ENCODE measurements at regions of chr3 and their contacts with region 1.

Region 1: GRCh38 chr3:77038468-77038929 is 1.4 kb upstream of the ROBO2 start:
- DNase-seq: peak; percentile 93
- H3K4me3 ChIP-seq: peak overlapping the region; percentile 67
- H3K27ac ChIP-seq: peak overlapping the region; percentile 82
- H3K4me1 ChIP-seq: peaks cover 6% of the 10 kb centered on the region
- H3K27me3 ChIP-seq: no peaks in the 10 kb centered on the region
- CTCF ChIP-seq: peak; percentile 55

Region 2: DNA sequence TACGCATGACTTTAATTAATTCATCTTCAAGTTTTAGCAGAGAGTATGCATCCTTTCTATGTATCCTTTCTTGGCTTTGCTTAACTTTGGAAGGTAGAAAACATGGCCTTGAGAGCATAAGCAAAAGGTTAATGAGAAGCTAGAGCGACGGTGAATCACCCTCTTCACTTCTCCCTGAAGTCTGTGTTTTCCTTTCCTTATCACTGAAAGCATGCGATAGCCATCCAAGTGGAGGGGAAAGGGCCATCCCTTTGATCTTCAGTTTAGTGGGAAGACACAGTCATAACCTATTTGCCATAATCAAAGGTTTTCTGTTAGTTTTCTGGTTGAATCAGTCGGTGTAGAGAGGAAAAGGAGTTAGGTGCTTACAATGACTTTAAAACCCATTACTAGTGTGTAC is 352.6 kb before region 1 on chr3:
- CTCF ChIA-PET with region 1: no interaction called
- POLR2A ChIA-PET with region 1: no interaction called
- intact Hi-C with region 1: loop called (anchors 5 kb)
- DNase-seq: no peak
- H3K4me3 ChIP-seq: no peak overlapping the region
- H3K27ac ChIP-seq: no peak overlapping the region
- H3K4me1 ChIP-seq: peaks cover 13% of the 10 kb centered on the region
- H3K27me3 ChIP-seq: no peaks in the 10 kb centered on the region
- CTCF ChIP-seq: no peak

Region 3: GRCh38 chr3:76815561-76815960 is 222.9 kb before region 1 on chr3:
- CTCF ChIA-PET with region 1: no interaction called
- POLR2A ChIA-PET with region 1: no interaction called
- intact Hi-C with region 1: loop called (anchors 2 kb)
- DNase-seq: no peak
- H3K4me3 ChIP-seq: no peak overlapping the region
- H3K27ac ChIP-seq: peak overlapping the region; percentile 10
- H3K4me1 ChIP-seq: peaks cover 33% of the 10 kb centered on the region
- H3K27me3 ChIP-seq: no peaks in the 10 kb centered on the region
- CTCF ChIP-seq: no peak

Region 4: GRCh38 chr3:77096966-77097890 is 58.7 kb after region 1 on chr3:
- CTCF ChIA-PET with region 1: no interaction called
- POLR2A ChIA-PET with region 1: no interaction called
- intact Hi-C with region 1: loop called (anchors 5 kb)
- DNase-seq: peak; percentile 78
- H3K4me3 ChIP-seq: peak overlapping the region; percentile 38
- H3K27ac ChIP-seq: peak overlapping the region; percentile 74
- H3K4me1 ChIP-seq: peaks cover 25% of the 10 kb centered on the region
- H3K27me3 ChIP-seq: no peaks in the 10 kb centered on the region
- CTCF ChIP-seq: no peak

Region 5: DNA sequence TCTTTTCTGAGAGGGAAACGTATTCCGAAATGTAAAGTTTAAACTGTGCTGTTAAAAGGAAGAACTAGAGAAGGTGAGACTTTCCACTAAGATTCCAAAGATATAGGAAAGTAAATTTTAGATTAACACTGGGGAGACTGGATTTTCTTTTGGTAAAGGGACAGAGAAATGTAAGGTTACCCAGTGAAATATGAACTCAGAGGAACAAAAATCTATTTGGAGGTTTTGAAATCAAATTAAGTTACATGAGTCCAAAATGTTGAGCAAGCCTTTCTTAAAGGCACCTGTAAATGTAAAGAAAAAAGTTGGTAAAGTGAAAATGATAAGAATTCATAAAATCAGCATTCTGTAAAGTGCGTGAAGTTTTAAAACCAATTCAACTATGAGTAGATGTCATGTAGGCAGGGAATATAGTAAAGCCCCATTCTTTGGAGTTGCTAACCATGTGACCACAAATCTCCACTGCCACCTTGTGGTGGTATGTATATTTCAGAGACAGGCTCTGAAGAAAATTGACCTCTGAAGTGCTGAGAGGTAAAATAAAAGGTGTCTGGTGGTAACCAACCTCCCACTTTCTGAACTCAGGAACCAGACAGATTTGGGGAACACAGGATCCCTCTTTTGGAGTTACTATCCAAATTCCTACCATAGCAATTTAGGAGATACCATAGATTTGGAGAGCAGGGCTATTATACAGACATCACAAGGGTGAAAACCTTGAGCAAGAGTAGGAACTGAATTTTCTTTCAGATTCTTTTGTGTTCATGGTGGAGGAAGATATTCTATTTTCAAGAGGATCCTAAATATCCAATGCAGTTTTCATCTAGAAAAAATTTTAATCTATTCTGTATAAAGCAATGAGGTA is 216.7 kb after region 1 on chr3:
- CTCF ChIA-PET with region 1: interaction called, 4 read pairs
- POLR2A ChIA-PET with region 1: no interaction called
- intact Hi-C with region 1: loop called (anchors 1 kb)
- DNase-seq: peak; percentile 68
- H3K4me3 ChIP-seq: no peak overlapping the region
- H3K27ac ChIP-seq: no peak overlapping the region
- H3K4me1 ChIP-seq: peaks cover 30% of the 10 kb centered on the region
- H3K27me3 ChIP-seq: no peaks in the 10 kb centered on the region
- CTCF ChIP-seq: peak; percentile 67

Region 6: DNA sequence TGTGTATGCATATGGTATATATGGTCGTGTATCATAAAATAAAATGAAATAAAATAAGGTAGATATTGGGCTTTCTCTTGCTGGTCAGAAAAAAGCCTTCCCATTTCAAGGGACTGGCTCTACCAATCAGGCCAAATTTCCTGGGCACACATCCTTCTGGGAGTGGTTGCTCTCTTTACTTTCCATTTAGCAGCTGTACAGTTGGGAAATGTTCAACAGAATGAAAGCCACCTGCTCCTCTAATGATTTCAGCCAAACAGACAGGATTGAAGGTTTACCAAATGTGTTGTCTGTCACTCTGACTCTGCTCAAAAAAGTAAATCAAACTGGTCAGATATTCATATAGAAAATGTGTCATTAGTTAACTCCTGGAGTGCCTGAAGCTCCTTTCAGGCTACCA is 381.8 kb after region 1 on chr3:
- CTCF ChIA-PET with region 1: no interaction called
- POLR2A ChIA-PET with region 1: no interaction called
- intact Hi-C with region 1: loop called (anchors 2 kb)
- DNase-seq: no peak
- H3K4me3 ChIP-seq: no peak overlapping the region
- H3K27ac ChIP-seq: no peak overlapping the region
- H3K4me1 ChIP-seq: peaks cover 28% of the 10 kb centered on the region
- H3K27me3 ChIP-seq: no peaks in the 10 kb centered on the region
- CTCF ChIP-seq: no peak

Region 7: DNA sequence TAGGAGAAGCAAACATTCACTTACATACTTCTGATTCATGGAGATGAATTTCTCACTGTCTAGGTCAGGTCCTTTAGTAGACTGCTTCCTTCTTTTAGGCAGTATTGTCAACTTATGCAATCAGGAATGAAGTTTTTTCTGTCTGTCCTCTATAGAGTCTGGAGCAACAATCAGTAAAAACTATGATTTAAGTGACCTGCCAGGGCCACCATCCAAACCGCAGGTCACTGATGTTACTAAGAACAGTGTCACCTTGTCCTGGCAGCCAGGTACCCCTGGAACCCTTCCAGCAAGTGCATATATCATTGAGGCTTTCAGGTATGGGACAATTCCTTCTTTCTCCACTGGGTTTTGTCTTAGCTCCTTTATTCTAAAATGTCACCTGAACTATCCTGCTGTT is 524.5 kb after region 1 on chr3:
- CTCF ChIA-PET with region 1: no interaction called
- POLR2A ChIA-PET with region 1: no interaction called
- intact Hi-C with region 1: no loop called
- DNase-seq: no peak
- H3K4me3 ChIP-seq: no peak overlapping the region
- H3K27ac ChIP-seq: no peak overlapping the region
- H3K4me1 ChIP-seq: no peaks in the 10 kb centered on the region
- H3K27me3 ChIP-seq: no peaks in the 10 kb centered on the region
- CTCF ChIP-seq: no peak